T-cell (primary cell): ENCODE measurements at regions of chr6 and their contacts with region 1.

Region 1: DNA sequence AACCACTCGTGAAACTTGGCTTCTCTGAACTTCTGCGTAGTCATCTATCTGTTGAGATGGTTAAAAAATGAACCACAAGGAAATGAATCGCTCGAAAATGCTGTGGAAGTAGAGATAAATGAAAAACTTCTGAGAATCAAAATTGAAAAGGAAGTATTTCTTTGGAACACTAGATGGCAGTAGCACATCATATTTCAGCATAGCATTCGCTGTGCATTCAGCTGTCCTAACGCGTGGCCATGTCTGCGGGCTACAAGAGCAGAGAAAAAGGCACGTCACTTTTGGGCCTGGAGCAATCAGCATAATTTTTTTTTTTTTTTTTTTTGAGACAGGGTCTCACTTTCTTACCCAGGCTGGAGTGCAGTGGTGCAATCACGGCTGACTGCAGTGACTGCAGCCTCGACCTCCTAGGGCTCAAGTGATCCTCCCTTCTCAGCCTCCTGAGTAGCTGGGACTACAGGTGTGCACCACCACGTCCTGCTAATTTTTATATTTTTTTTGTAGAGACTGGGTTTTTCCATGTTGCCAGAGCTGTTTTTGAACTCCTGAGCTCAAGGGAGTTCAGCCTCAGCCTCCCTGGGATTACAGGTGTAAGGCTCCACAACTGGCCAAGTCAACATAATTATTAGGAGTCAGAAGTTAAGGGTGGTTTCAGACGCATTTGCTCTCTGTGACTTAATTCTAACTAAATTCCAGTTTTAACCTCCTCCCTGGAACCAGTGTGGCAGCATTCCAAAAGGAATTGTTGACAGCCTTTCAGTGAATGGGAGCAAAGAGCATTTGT is 8.8 kb upstream of the PERP start:
- DNase-seq: peak in 28 of 35 experiments; percentile 6 to 82 (median 26)
- ATAC-seq: peak; percentile 74 to 94 (median 86)
- H3K4me3 ChIP-seq: no peak overlapping the region
- H3K4me3 Mint-ChIP-seq: no peak overlapping the region
- H3K27ac ChIP-seq: no peak overlapping the region
- H3K27ac Mint-ChIP-seq: no peak overlapping the region
- H3K4me1 ChIP-seq: no peaks in the 10 kb centered on the region
- H3K4me1 Mint-ChIP-seq: peaks cover 6 to 7% (median 6%) of the 10 kb centered on the region in 3 donors
- H3K27me3 ChIP-seq: peaks cover 2 to 6% of the 10 kb centered on the region in 2 experiments
- H3K27me3 Mint-ChIP-seq: peaks cover 21 to 33% of the 10 kb centered on the region in 2 donors

Region 2: GRCh38 chr6:138001750-138002349 is 114.2 kb before region 1 on chr6:
- CTCF ChIA-PET with region 1: interaction called, 10 to 12 read pairs
- POLR2A ChIA-PET with region 1: no interaction called
- DNase-seq: peak in 34 of 35 experiments; percentile 5 to 79 (median 52)
- ATAC-seq: peak; percentile 32 to 69 (median 52)
- H3K4me3 ChIP-seq: no peak overlapping the region
- H3K4me3 Mint-ChIP-seq: no peak overlapping the region
- H3K27ac ChIP-seq: no peak overlapping the region
- H3K27ac Mint-ChIP-seq: no peak overlapping the region
- H3K4me1 ChIP-seq: peaks cover 0 to 2% of the 10 kb centered on the region in 2 experiments
- H3K4me1 Mint-ChIP-seq: peaks cover 2 to 6% (median 5%) of the 10 kb centered on the region in 3 donors
- H3K27me3 ChIP-seq: no peaks in the 10 kb centered on the region
- H3K27me3 Mint-ChIP-seq: peaks cover 0 to 7% of the 10 kb centered on the region in 2 donors

Region 3: GRCh38 chr6:138287144-138287955 is 171.3 kb after region 1 on chr6:
- CTCF ChIA-PET with region 1: interaction called, 5 to 29 read pairs
- POLR2A ChIA-PET with region 1: no interaction called
- DNase-seq: peak in 30 of 35 experiments; percentile 5 to 62 (median 27)
- ATAC-seq: peak in 3 of 4 experiments; percentile 36 to 66 (median 46)
- H3K4me3 ChIP-seq: no peak overlapping the region
- H3K4me3 Mint-ChIP-seq: no peak overlapping the region
- H3K27ac ChIP-seq: no peak overlapping the region
- H3K27ac Mint-ChIP-seq: no peak overlapping the region
- H3K4me1 ChIP-seq: no peaks in the 10 kb centered on the region
- H3K4me1 Mint-ChIP-seq: no peaks in the 10 kb centered on the region
- H3K27me3 ChIP-seq: peaks cover 0 to 15% of the 10 kb centered on the region in 2 experiments
- H3K27me3 Mint-ChIP-seq: peaks cover 0 to 3% of the 10 kb centered on the region in 2 donors